Calu3 (cell line): ENCODE measurements at regions of chr16 and their contacts with region 1.

Region 1: DNA sequence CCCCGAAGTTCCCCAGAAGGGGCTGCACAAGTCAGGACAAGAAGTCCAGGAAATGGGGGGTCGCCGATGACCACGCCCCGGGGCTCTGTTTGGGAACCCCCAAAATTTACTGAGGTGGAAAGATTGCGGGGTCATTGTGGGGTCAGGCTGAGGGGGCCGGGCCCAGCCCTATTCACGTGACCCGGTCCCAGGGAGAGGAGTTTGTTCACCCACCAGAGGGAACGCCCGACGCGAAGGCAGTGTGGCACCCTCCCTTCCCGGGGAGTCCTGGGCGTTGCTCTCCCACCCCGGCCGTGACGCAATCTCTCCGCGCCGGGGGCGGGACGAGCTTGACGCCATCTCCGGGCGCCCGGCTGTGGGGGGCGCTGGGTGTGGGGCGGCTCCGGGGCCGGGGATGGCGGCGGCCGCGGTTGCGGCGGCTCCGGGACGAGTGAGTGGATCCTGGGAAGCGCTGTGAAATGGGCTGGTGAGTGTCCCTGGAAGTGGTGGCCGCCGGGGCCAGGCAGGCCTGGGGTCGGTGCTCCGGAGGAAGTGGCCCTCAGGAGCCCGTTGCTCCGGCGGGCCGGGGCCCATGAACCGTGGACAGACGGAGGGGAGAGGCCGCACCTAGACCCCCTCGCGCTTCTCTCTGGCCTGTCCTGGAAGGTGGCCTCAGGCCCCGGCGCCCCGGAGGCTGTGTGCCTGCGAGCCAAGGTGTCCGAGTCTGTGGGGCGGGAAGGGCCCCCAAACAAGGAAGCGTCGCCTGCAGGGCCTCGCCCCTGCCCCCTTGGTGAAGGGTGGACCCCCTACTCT is at the start of gene ATXN1L:
- DNase-seq: peak; percentile 98
- H3K4me3 Mint-ChIP-seq: peak within 1 kb of the TSS; percentile 87
- H3K27ac Mint-ChIP-seq: peak within 1 kb of the TSS; percentile 97
- H3K4me1 Mint-ChIP-seq: peaks cover 27% of the 10 kb centered on the region
- H3K27me3 Mint-ChIP-seq: no peaks in the 10 kb centered on the region
- CTCF ChIP-seq: no peak
- total RNA-seq, gene ATXN1L: 44.1 and 48.1 TPM in 2 replicates

Region 2: GRCh38 chr16:71426072-71426879 is 419.6 kb before region 1 on chr16:
- CTCF ChIA-PET with region 1: interaction called, 10 read pairs
- intact Hi-C with region 1: no loop called
- DNase-seq: peak; percentile 78
- H3K4me3 Mint-ChIP-seq: peak overlapping the region; percentile 72
- H3K27ac Mint-ChIP-seq: peak overlapping the region; percentile 95
- H3K4me1 Mint-ChIP-seq: peaks cover 14% of the 10 kb centered on the region
- H3K27me3 Mint-ChIP-seq: peaks cover 71% of the 10 kb centered on the region
- CTCF ChIP-seq: no peak

Region 3: GRCh38 chr16:71995038-71995437 is 149.2 kb after region 1 on chr16:
- CTCF ChIA-PET with region 1: no interaction called
- intact Hi-C with region 1: no loop called
- DNase-seq: no peak
- H3K4me3 Mint-ChIP-seq: no peak overlapping the region
- H3K27ac Mint-ChIP-seq: no peak overlapping the region
- H3K4me1 Mint-ChIP-seq: no peaks in the 10 kb centered on the region
- H3K27me3 Mint-ChIP-seq: peaks cover 48% of the 10 kb centered on the region
- CTCF ChIP-seq: no peak

Region 4: DNA sequence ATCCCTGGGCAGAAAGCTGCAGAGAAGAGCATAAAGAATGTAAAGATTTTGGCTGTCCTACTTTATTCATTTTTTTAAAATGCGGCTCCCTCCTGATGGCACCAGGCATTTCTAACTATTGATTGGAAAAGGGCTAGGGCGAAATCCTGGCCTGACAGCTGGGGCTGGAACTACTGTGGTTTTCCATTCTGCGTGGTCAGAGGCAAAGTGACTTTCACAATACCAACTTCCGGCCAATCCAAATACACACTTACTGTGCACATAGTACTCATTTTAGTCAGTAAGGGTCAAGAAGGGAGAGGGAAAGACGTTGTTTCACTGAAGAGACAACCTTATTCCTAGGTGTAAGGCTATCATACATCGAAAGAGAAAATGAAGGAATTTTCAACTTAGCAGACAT is 439.9 kb after region 1 on chr16:
- CTCF ChIA-PET with region 1: no interaction called
- intact Hi-C with region 1: no loop called
- DNase-seq: no peak
- H3K4me3 Mint-ChIP-seq: no peak overlapping the region
- H3K27ac Mint-ChIP-seq: no peak overlapping the region
- H3K4me1 Mint-ChIP-seq: peaks cover under 1% of the 10 kb centered on the region
- H3K27me3 Mint-ChIP-seq: no peaks in the 10 kb centered on the region
- CTCF ChIP-seq: no peak